Endothelial cell of umbilical vein (primary cell): ENCODE measurements at regions of chr12 and their contacts with region 1.

Region 1: GRCh38 chr12:27821259-27821973 is 41.4 kb upstream of the MANSC4 start:
- DNase-seq: peak; percentile 89
- H3K4me3 ChIP-seq: peak overlapping the region in 1 of 3 experiments; percentile 6
- H3K27ac ChIP-seq: peak overlapping the region; percentile 99
- H3K4me1 ChIP-seq: peaks cover 24% of the 10 kb centered on the region
- H3K27me3 ChIP-seq: no peaks in the 10 kb centered on the region
- CTCF ChIP-seq: peak; percentile 60 to 66
- POLR2A ChIP-seq: no peak

Region 2: GRCh38 chr12:27564612-27565213 is 256.7 kb before region 1 on chr12:
- CTCF ChIA-PET with region 1: no interaction called
- POLR2A ChIA-PET with region 1: no interaction called
- dilution Hi-C with region 1: no loop called
- intact Hi-C with region 1: no loop called
- DNase-seq: peak; percentile 67
- H3K4me3 ChIP-seq: no peak overlapping the region
- H3K27ac ChIP-seq: peak overlapping the region; percentile 63
- H3K4me1 ChIP-seq: peaks cover 34% of the 10 kb centered on the region
- H3K27me3 ChIP-seq: no peaks in the 10 kb centered on the region
- CTCF ChIP-seq: no peak
- POLR2A ChIP-seq: no peak

Region 3: GRCh38 chr12:27733052-27733656 is 88.3 kb before region 1 on chr12:
- CTCF ChIA-PET with region 1: interaction called, 61 read pairs
- POLR2A ChIA-PET with region 1: no interaction called
- dilution Hi-C with region 1: no loop called
- intact Hi-C with region 1: loop called (anchors 1 kb)
- DNase-seq: peak; percentile 51
- H3K4me3 ChIP-seq: no peak overlapping the region
- H3K27ac ChIP-seq: no peak overlapping the region
- H3K4me1 ChIP-seq: no peaks in the 10 kb centered on the region
- H3K27me3 ChIP-seq: no peaks in the 10 kb centered on the region
- CTCF ChIP-seq: peak; percentile 72 to 76
- POLR2A ChIP-seq: no peak

Region 4: GRCh38 chr12:27779920-27780611 is 41.4 kb before region 1 on chr12 and contains the starts of genes KLHL42 and MANSC4:
- CTCF ChIA-PET with region 1: interaction called, 20 read pairs
- POLR2A ChIA-PET with region 1: no interaction called
- dilution Hi-C with region 1: no loop called
- intact Hi-C with region 1: loop called (anchors 1 kb)
- DNase-seq: peak; percentile 63
- H3K4me3 ChIP-seq: peak within 1 kb of the TSS; percentile 18 to 48 (median 43)
- H3K27ac ChIP-seq: peak within 1 kb of the TSS; percentile 64
- H3K4me1 ChIP-seq: peaks cover 22% of the 10 kb centered on the region
- H3K27me3 ChIP-seq: no peaks in the 10 kb centered on the region
- CTCF ChIP-seq: peak in 1 of 2 donors; percentile 5
- POLR2A ChIP-seq: peak; percentile 70
- total RNA-seq, gene KLHL42: 36.2 and 36.5 TPM in 2 replicates
- total RNA-seq, gene MANSC4: 0.65 TPM in 1 of 2 replicates, not detected in the other

Region 5: GRCh38 chr12:27840244-27840999 is 19.0 kb after region 1 on chr12:
- CTCF ChIA-PET with region 1: interaction called, 43 read pairs
- POLR2A ChIA-PET with region 1: no interaction called
- dilution Hi-C with region 1: no loop called
- intact Hi-C with region 1: loop called (anchors 1 kb)
- DNase-seq: peak; percentile 33
- H3K4me3 ChIP-seq: no peak overlapping the region
- H3K27ac ChIP-seq: no peak overlapping the region
- H3K4me1 ChIP-seq: peaks cover 12% of the 10 kb centered on the region
- H3K27me3 ChIP-seq: peaks cover 0 to 1% of the 10 kb centered on the region in 2 experiments
- CTCF ChIP-seq: peak; percentile 6 to 37
- POLR2A ChIP-seq: no peak

Region 6: GRCh38 chr12:28130625-28131598 is 309.5 kb after region 1 on chr12:
- CTCF ChIA-PET with region 1: interaction called, 3 read pairs
- POLR2A ChIA-PET with region 1: no interaction called
- dilution Hi-C with region 1: no loop called
- intact Hi-C with region 1: loop called (anchors 1 kb)
- DNase-seq: peak; percentile 99
- H3K4me3 ChIP-seq: no peak overlapping the region
- H3K27ac ChIP-seq: peak overlapping the region; percentile 84
- H3K4me1 ChIP-seq: peaks cover 21% of the 10 kb centered on the region
- H3K27me3 ChIP-seq: no peaks in the 10 kb centered on the region
- CTCF ChIP-seq: no peak
- POLR2A ChIP-seq: no peak

Region 7: DNA sequence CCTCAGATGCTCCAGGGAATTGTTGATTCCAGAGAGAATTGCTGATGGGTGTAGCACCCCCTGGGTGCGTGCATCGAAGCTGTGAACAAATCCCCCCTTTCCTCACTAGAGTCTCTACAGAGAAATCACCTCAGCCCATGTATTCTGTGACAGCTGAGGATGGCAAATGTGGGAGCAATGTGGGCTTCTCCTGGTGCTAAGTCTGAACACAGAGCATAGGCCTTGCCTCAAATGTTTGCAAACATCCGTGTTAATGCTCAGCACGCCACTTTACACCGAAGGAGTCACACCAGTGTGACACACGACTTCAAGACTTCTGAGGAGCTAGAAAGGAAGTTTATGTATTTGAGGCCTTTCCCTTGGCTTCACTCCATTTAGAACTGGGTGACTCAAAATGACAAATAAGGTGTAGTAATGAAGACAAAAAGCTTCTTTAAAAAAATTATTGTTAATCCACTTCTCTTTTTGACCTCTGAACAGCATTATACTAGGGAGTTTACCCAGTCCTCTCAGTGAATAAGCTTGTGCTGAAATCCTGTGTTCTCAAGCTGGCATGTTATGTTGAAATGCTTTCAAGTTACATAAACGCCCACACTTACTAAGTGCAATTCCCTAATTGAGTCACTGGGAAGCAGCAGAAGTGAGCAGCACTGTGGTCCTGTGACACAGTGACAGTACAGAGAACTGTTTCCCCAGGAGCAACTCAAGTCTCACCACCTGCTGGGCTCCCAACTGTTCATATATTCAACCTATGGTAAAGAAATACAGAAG is 1420.6 kb after region 1 on chr12:
- CTCF ChIA-PET with region 1: no interaction called
- POLR2A ChIA-PET with region 1: no interaction called
- dilution Hi-C with region 1: no loop called
- intact Hi-C with region 1: loop called (anchors 2 kb)
- DNase-seq: peak; percentile 84
- H3K4me3 ChIP-seq: peak overlapping the region in 1 of 3 experiments; percentile 15
- H3K27ac ChIP-seq: peak overlapping the region; percentile 94
- H3K4me1 ChIP-seq: peaks cover 68% of the 10 kb centered on the region
- H3K27me3 ChIP-seq: no peaks in the 10 kb centered on the region
- CTCF ChIP-seq: peak in 1 of 2 donors; percentile 8
- POLR2A ChIP-seq: peak; percentile 28